H1 (cell line): ENCODE measurements at regions of chr11 and their contacts with region 1.

Region 1: GRCh38 chr11:57649826-57650738 is at the start of gene YPEL4:
- DNase-seq: peak in 1 of 2 experiments; percentile 60
- H3K4me3 ChIP-seq: peak within 1 kb of the TSS; percentile 27 to 65 (median 50); a peak in 7 of 8 replicates
- H3K27ac ChIP-seq: no peak within 1 kb of the TSS
- H3K4me1 ChIP-seq: peaks cover 26 to 47% (median 34%) of the 10 kb centered on the region in 4 experiments
- H3K27me3 ChIP-seq: peaks cover 0 to 4% (median 1%) of the 10 kb centered on the region in 4 experiments; a peak in 5 of 7 replicates
- CTCF ChIP-seq: no peak
- EP300 ChIP-seq: no peak
- POLR2A ChIP-seq: peak; percentile 36 to 75
- RAD21 ChIP-seq: no peak
- total RNA-seq, gene YPEL4: 0.13 TPM in 1 of 2 replicates, not detected in the other

Region 2: GRCh38 chr11:57515332-57516060 is 134.6 kb before region 1 on chr11 and contains the start of gene SLC43A1:
- CTCF ChIA-PET with region 1: no interaction called
- POLR2A ChIA-PET with region 1: interaction called, 77 read pairs
- DNase-seq: peak in 1 of 2 experiments; percentile 66
- H3K4me3 ChIP-seq: peak within 1 kb of the TSS; percentile 49 to 76 (median 68)
- H3K27ac ChIP-seq: no peak within 1 kb of the TSS
- H3K4me1 ChIP-seq: peaks cover 3 to 10% (median 5%) of the 10 kb centered on the region in 4 experiments
- H3K27me3 ChIP-seq: peaks cover 0 to 21% (median 10%) of the 10 kb centered on the region in 4 experiments; a peak in 4 of 7 replicates
- CTCF ChIP-seq: no peak
- EP300 ChIP-seq: no peak
- POLR2A ChIP-seq: no peak; a peak in 1 of 3 replicates
- RAD21 ChIP-seq: 0 out of 4 replicates have a peak, but pooled peaks of 1 of the 2 experiments have one; percentile 0
- total RNA-seq, gene SLC43A1: 30.1 and 34.5 TPM in 2 replicates

Region 3: GRCh38 chr11:57667736-57668435 is 17.8 kb after region 1 on chr11 and contains the start of gene ZDHHC5:
- CTCF ChIA-PET with region 1: interaction called, 8 read pairs
- POLR2A ChIA-PET with region 1: interaction called, 79 read pairs
- DNase-seq: peak; percentile 97
- H3K4me3 ChIP-seq: peak within 1 kb of the TSS; percentile 90 to 95 (median 94)
- H3K27ac ChIP-seq: peak within 1 kb of the TSS; percentile 99
- H3K4me1 ChIP-seq: peaks cover 0 to 7% (median 2%) of the 10 kb centered on the region in 4 experiments; a peak in 3 of 7 replicates
- H3K27me3 ChIP-seq: no peaks in the 10 kb centered on the region
- CTCF ChIP-seq: peak; percentile 14 to 46 (median 37); a peak in 2 of 4 replicates
- EP300 ChIP-seq: 0 out of 3 replicates have a peak, but pooled peaks of 1 of the 2 experiments have one; percentile 27
- POLR2A ChIP-seq: peak; percentile 20 to 92; a peak in 2 of 3 replicates
- RAD21 ChIP-seq: no peak
- total RNA-seq, gene ZDHHC5: 54.8 and 56.3 TPM in 2 replicates